Endothelial cell of umbilical vein (primary cell): ENCODE measurements at regions of chr7 and their contacts with region 1.

Region 1: GRCh38 chr7:77536413-77537135 is 521 bp upstream of the PTPN12 start:
- DNase-seq: peak; percentile 96
- H3K4me3 ChIP-seq: peak overlapping the region; percentile 21 to 64 (median 50)
- H3K27ac ChIP-seq: peak overlapping the region; percentile 33
- H3K4me1 ChIP-seq: peaks cover 21% of the 10 kb centered on the region
- H3K27me3 ChIP-seq: no peaks in the 10 kb centered on the region
- CTCF ChIP-seq: no peak
- POLR2A ChIP-seq: peak; percentile 92

Region 2: GRCh38 chr7:77326696-77327628 is 209.6 kb before region 1 on chr7:
- CTCF ChIA-PET with region 1: no interaction called
- POLR2A ChIA-PET with region 1: no interaction called
- dilution Hi-C with region 1: no loop called
- intact Hi-C with region 1: loop called (anchors 1 kb)
- DNase-seq: peak; percentile 21
- H3K4me3 ChIP-seq: no peak overlapping the region
- H3K27ac ChIP-seq: no peak overlapping the region
- H3K4me1 ChIP-seq: peaks cover 60% of the 10 kb centered on the region
- H3K27me3 ChIP-seq: no peaks in the 10 kb centered on the region
- CTCF ChIP-seq: no peak
- POLR2A ChIP-seq: no peak

Region 3: DNA sequence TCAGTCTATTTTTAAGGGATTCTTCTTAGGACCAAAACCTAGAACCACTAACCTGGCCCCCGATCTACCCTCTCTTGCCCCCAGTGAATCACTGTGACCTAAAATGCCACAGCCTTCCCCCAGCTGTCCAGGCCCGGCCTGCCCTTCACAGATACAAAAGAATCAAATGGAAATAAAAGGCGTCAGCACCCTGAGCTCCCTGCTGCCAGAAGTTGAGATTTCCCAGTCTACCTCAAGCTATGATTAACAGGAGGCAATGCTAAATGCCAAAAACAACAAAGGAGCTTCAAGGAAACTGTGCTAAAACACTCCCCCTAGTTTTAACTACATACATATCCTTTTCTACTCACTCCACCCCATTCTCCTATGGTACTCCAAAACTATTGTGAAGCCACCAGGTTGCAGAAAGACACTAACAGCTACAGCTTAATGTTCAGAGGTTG is 188.2 kb before region 1 on chr7:
- CTCF ChIA-PET with region 1: no interaction called
- POLR2A ChIA-PET with region 1: interaction called, 6 read pairs
- dilution Hi-C with region 1: no loop called
- intact Hi-C with region 1: loop called (anchors 2 kb)
- DNase-seq: peak; percentile 91
- H3K4me3 ChIP-seq: no peak overlapping the region
- H3K27ac ChIP-seq: no peak overlapping the region
- H3K4me1 ChIP-seq: peaks cover 22% of the 10 kb centered on the region
- H3K27me3 ChIP-seq: no peaks in the 10 kb centered on the region
- CTCF ChIP-seq: no peak
- POLR2A ChIP-seq: no peak

Region 4: DNA sequence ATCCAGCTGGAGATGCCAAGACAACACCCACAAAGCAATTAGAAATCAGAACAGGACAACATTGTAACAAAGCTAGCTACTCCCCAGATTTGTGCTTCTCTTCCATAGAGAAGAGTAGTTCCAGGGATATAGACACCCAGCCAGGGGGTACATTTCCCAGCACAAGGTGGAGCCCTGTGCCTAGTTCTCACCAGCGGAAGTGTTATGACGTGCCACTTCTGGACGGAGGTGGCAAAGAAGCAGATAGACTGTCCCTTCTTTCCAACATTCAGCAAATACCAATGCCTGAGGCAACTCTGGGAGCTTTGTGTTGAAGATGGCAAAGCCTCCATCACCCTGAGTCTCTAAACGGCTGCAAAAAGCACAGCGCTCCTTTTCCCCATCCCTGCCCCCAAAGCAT is 97.0 kb before region 1 on chr7:
- CTCF ChIA-PET with region 1: interaction called, 6 read pairs
- POLR2A ChIA-PET with region 1: interaction called, 8 read pairs
- dilution Hi-C with region 1: no loop called
- intact Hi-C with region 1: loop called (anchors 1 kb)
- DNase-seq: peak; percentile 41
- H3K4me3 ChIP-seq: no peak overlapping the region
- H3K27ac ChIP-seq: no peak overlapping the region
- H3K4me1 ChIP-seq: peaks cover 11% of the 10 kb centered on the region
- H3K27me3 ChIP-seq: no peaks in the 10 kb centered on the region
- CTCF ChIP-seq: peak; percentile 19 to 24
- POLR2A ChIP-seq: no peak

Region 5: GRCh38 chr7:77481615-77482402 is 54.8 kb before region 1 on chr7:
- CTCF ChIA-PET with region 1: no interaction called
- POLR2A ChIA-PET with region 1: no interaction called
- dilution Hi-C with region 1: no loop called
- intact Hi-C with region 1: no loop called
- DNase-seq: no peak
- H3K4me3 ChIP-seq: no peak overlapping the region
- H3K27ac ChIP-seq: no peak overlapping the region
- H3K4me1 ChIP-seq: no peaks in the 10 kb centered on the region
- H3K27me3 ChIP-seq: peaks cover 0 to 4% of the 10 kb centered on the region in 2 experiments
- CTCF ChIP-seq: no peak
- POLR2A ChIP-seq: no peak

Region 6: DNA sequence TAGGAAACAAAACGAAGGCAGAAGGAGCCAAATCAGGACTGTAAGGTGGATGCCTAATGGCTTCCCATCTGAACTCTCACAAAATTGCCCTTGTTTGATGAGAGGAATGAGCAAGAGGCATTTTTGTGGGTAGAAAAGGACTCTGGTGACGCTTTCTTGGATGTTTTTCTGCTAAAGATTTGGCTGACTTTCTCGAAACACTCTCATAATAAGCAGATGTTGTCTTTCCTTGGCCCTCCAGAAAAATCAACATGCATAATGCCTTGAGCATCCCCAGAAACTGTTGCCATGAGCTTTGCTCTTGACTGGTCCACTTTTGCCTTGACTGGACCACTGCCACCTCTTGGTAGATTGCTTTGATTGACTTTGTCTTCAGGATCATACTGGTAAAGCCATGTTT is 14.0 kb after region 1 on chr7:
- CTCF ChIA-PET with region 1: interaction called, 17 read pairs
- POLR2A ChIA-PET with region 1: interaction called, 5 read pairs
- dilution Hi-C with region 1: no loop called
- intact Hi-C with region 1: loop called (anchors 1 kb)
- DNase-seq: no peak
- H3K4me3 ChIP-seq: no peak overlapping the region
- H3K27ac ChIP-seq: no peak overlapping the region
- H3K4me1 ChIP-seq: peaks cover 35% of the 10 kb centered on the region
- H3K27me3 ChIP-seq: no peaks in the 10 kb centered on the region
- CTCF ChIP-seq: no peak
- POLR2A ChIP-seq: no peak

Region 7: DNA sequence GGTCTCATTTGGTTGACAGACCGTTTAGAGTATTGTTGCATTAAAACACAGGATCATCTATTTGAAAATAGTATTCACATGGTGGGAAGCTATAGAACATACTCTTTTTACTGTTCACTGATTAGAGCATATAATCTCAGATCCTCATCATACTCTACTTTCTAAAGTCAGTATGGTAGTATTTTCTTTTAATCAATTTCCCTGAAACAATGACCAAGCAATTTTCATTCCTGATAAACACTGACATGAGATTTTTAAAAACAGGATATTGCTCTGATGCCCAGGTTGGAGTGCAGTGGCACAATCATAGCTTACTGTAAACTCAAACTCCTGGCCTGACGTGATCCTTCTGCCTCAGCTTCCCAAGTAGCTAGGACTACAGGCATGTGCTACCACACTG is 64.4 kb after region 1 on chr7:
- CTCF ChIA-PET with region 1: interaction called, 3 read pairs
- POLR2A ChIA-PET with region 1: no interaction called
- dilution Hi-C with region 1: no loop called
- intact Hi-C with region 1: loop called (anchors 5 kb)
- DNase-seq: no peak
- H3K4me3 ChIP-seq: no peak overlapping the region
- H3K27ac ChIP-seq: no peak overlapping the region
- H3K4me1 ChIP-seq: no peaks in the 10 kb centered on the region
- H3K27me3 ChIP-seq: no peaks in the 10 kb centered on the region
- CTCF ChIP-seq: no peak
- POLR2A ChIP-seq: no peak

Region 8: GRCh38 chr7:77798394-77799077 is 262.0 kb after region 1 on chr7 and contains the starts of genes PHTF2 and TMEM60:
- CTCF ChIA-PET with region 1: no interaction called
- POLR2A ChIA-PET with region 1: no interaction called
- dilution Hi-C with region 1: no loop called
- intact Hi-C with region 1: loop called (anchors 5 kb)
- DNase-seq: peak; percentile 100
- H3K4me3 ChIP-seq: peak within 1 kb of the TSS; percentile 70 to 94 (median 90)
- H3K27ac ChIP-seq: peak within 1 kb of the TSS; percentile 66
- H3K4me1 ChIP-seq: peaks cover 31% of the 10 kb centered on the region
- H3K27me3 ChIP-seq: no peaks in the 10 kb centered on the region
- CTCF ChIP-seq: peak; percentile 41 to 73
- POLR2A ChIP-seq: peak; percentile 15
- total RNA-seq, gene PHTF2: 21.4 TPM in 2 replicates
- total RNA-seq, gene TMEM60: 15.0 and 15.8 TPM in 2 replicates